ENCODE measurements at regions of chr11 and their contacts with region 1.

Region 1: GRCh38 chr11:61581030-61581928 is at the start of gene SYT7:
- DNase-seq: peak; percentile 91 to 92
- ATAC-seq: peak; percentile 89 to 91
- H3K4me3 ChIP-seq: peak within 1 kb of the TSS; percentile 44 to 60 (median 56)
- H3K27ac ChIP-seq: peak within 1 kb of the TSS; percentile 64 to 77 (median 72)
- H3K4me1 ChIP-seq: peaks cover 4 to 5% of the 10 kb centered on the region in 2 donors
- H3K27me3 ChIP-seq: peaks cover 0 to 2% (median 0%) of the 10 kb centered on the region in 3 donors
- CTCF ChIP-seq: peak in 4 of 5 experiments; percentile 17 to 79 (median 62)
- POLR2A ChIP-seq: no peak
- total RNA-seq, gene SYT7: 0.68 to 4.9 (median 1.4) TPM

Region 2: GRCh38 chr11:61338783-61339489 is 242.3 kb before region 1 on chr11:
- in situ Hi-C with region 1: no loop called
- intact Hi-C with region 1: no loop called
- DNase-seq: no peak
- ATAC-seq: no peak
- H3K4me3 ChIP-seq: no peak overlapping the region
- H3K27ac ChIP-seq: no peak overlapping the region
- H3K4me1 ChIP-seq: peaks cover 2 to 6% of the 10 kb centered on the region in 2 donors
- H3K27me3 ChIP-seq: no peaks in the 10 kb centered on the region
- CTCF ChIP-seq: no peak
- POLR2A ChIP-seq: no peak

Region 3: GRCh38 chr11:61598886-61599868 is 17.9 kb after region 1 on chr11:
- in situ Hi-C with region 1: no loop called
- intact Hi-C with region 1: loop called (anchors 2 kb)
- DNase-seq: peak in 1 of 2 donors; percentile 33
- ATAC-seq: no peak
- H3K4me3 ChIP-seq: no peak overlapping the region
- H3K27ac ChIP-seq: peak overlapping the region; percentile 46 to 61 (median 57)
- H3K4me1 ChIP-seq: peaks cover 8 to 13% of the 10 kb centered on the region in 2 donors
- H3K27me3 ChIP-seq: no peaks in the 10 kb centered on the region
- CTCF ChIP-seq: no peak
- POLR2A ChIP-seq: no peak

Region 4: GRCh38 chr11:61627567-61628445 is 46.5 kb after region 1 on chr11:
- in situ Hi-C with region 1: no loop called
- intact Hi-C with region 1: loop called (anchors 1 kb)
- DNase-seq: peak; percentile 48 to 67
- ATAC-seq: peak; percentile 60
- H3K4me3 ChIP-seq: no peak overlapping the region
- H3K27ac ChIP-seq: peak overlapping the region; percentile 70 to 88 (median 84)
- H3K4me1 ChIP-seq: peaks cover 26 to 44% of the 10 kb centered on the region in 2 donors
- H3K27me3 ChIP-seq: no peaks in the 10 kb centered on the region
- CTCF ChIP-seq: peak; percentile 50 to 77 (median 70)
- POLR2A ChIP-seq: no peak